ENCODE measurements at regions of chrX and their contacts with region 1.

Region 1: GRCh38 chrX:101390664-101391525 is at the start of gene RPL36A:
- DNase-seq: peak; percentile 63
- ATAC-seq: peak; percentile 85
- H3K4me3 ChIP-seq: peak within 1 kb of the TSS; percentile 72
- H3K27ac ChIP-seq: peak within 1 kb of the TSS; percentile 76
- H3K4me1 ChIP-seq: no peaks in the 10 kb centered on the region
- H3K27me3 ChIP-seq: no peaks in the 10 kb centered on the region
- CTCF ChIP-seq: peak; percentile 62 to 77 (median 74)
- EP300 ChIP-seq: no peak
- POLR2A ChIP-seq: peak; percentile 98
- RAD21 ChIP-seq: no peak
- polyA plus RNA-seq, gene RPL36A: 3,535 to 3,952 TPM

Region 2: GRCh38 chrX:100819837-100820666 is 570.8 kb before region 1 on chrX and contains the start of gene CSTF2:
- CTCF ChIA-PET with region 1: no interaction called
- POLR2A ChIA-PET with region 1: no interaction called
- RAD21 ChIA-PET with region 1: no interaction called
- SMC1A ChIA-PET with region 1: no interaction called
- in situ Hi-C with region 1: no loop called
- intact Hi-C with region 1: loop called (anchors 5 kb)
- DNase-seq: peak; percentile 50
- ATAC-seq: peak; percentile 100
- H3K4me3 ChIP-seq: peak within 1 kb of the TSS; percentile 76
- H3K27ac ChIP-seq: peak within 1 kb of the TSS; percentile 39
- H3K4me1 ChIP-seq: no peaks in the 10 kb centered on the region
- H3K27me3 ChIP-seq: no peaks in the 10 kb centered on the region; a peak in 2 of 4 replicates
- CTCF ChIP-seq: no peak
- EP300 ChIP-seq: no peak
- POLR2A ChIP-seq: peak; percentile 89
- RAD21 ChIP-seq: no peak
- polyA plus RNA-seq, gene CSTF2: 7.7 to 9.0 TPM

Region 3: GRCh38 chrX:101252634-101253033 is 138.3 kb before region 1 on chrX:
- CTCF ChIA-PET with region 1: no interaction called
- POLR2A ChIA-PET with region 1: no interaction called
- RAD21 ChIA-PET with region 1: no interaction called
- SMC1A ChIA-PET with region 1: no interaction called
- in situ Hi-C with region 1: no loop called
- intact Hi-C with region 1: no loop called
- DNase-seq: no peak
- ATAC-seq: no peak
- H3K4me3 ChIP-seq: no peak overlapping the region
- H3K27ac ChIP-seq: no peak overlapping the region
- H3K4me1 ChIP-seq: no peaks in the 10 kb centered on the region
- H3K27me3 ChIP-seq: no peaks in the 10 kb centered on the region
- CTCF ChIP-seq: no peak
- EP300 ChIP-seq: no peak
- POLR2A ChIP-seq: no peak
- RAD21 ChIP-seq: no peak

Region 4: GRCh38 chrX:101348452-101349192 is 42.3 kb before region 1 on chrX and contains the start of gene TIMM8A:
- CTCF ChIA-PET with region 1: interaction called, 9 read pairs
- POLR2A ChIA-PET with region 1: interaction called, 12 read pairs
- RAD21 ChIA-PET with region 1: interaction called, 4 read pairs
- SMC1A ChIA-PET with region 1: interaction called, 6 read pairs
- in situ Hi-C with region 1: no loop called
- intact Hi-C with region 1: loop called (anchors 5 kb)
- DNase-seq: peak; percentile 31
- ATAC-seq: peak; percentile 99
- H3K4me3 ChIP-seq: peak within 1 kb of the TSS; percentile 87
- H3K27ac ChIP-seq: peak within 1 kb of the TSS; percentile 72
- H3K4me1 ChIP-seq: 0 out of 2 replicates have a peak, but pooled peaks cover 3% of the 10 kb centered on the region
- H3K27me3 ChIP-seq: no peaks in the 10 kb centered on the region
- CTCF ChIP-seq: no peak
- EP300 ChIP-seq: no peak
- POLR2A ChIP-seq: peak; percentile 88
- RAD21 ChIP-seq: no peak
- polyA plus RNA-seq, gene TIMM8A: 84.5 to 92.7 TPM

Region 5: GRCh38 chrX:101407748-101408531 is 17.0 kb after region 1 on chrX and contains the starts of genes GLA and HNRNPH2:
- CTCF ChIA-PET with region 1: interaction called, 8 read pairs
- POLR2A ChIA-PET with region 1: interaction called, 7 read pairs
- RAD21 ChIA-PET with region 1: interaction called, 4 read pairs
- SMC1A ChIA-PET with region 1: interaction called, 6 read pairs
- in situ Hi-C with region 1: no loop called
- intact Hi-C with region 1: loop called (anchors 2 kb)
- DNase-seq: peak; percentile 98
- ATAC-seq: peak; percentile 88
- H3K4me3 ChIP-seq: peak within 1 kb of the TSS; percentile 75
- H3K27ac ChIP-seq: peak within 1 kb of the TSS; percentile 92
- H3K4me1 ChIP-seq: peaks cover 12% of the 10 kb centered on the region
- H3K27me3 ChIP-seq: no peaks in the 10 kb centered on the region
- CTCF ChIP-seq: no peak
- EP300 ChIP-seq: peak; percentile 41 to 70; a peak in 3 of 4 replicates
- POLR2A ChIP-seq: peak; percentile 77
- RAD21 ChIP-seq: peak; percentile 9; the same call in 1 of the 2 replicates
- polyA plus RNA-seq, gene GLA: 39.2 to 66.4 TPM
- polyA plus RNA-seq, gene HNRNPH2: 55.7 to 90.8 TPM

Region 6: DNA sequence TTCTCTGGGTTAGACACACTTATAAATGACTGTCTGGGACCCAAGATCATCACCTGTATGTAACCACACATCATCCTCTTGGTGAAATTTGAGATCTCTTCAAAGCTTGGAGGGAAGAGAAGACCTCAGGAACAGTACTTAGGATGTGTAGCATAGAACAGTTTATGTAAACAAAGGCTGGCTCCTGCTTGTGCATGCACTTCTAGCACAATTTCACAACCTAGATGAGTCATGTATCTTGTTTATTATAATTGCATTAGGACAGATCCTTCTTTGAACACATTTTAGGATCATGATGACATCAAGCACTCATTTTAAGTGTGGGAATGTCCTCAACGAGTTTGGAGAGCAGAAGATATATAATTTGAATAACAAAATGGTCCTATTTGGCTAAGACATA is 567.2 kb after region 1 on chrX:
- CTCF ChIA-PET with region 1: no interaction called
- POLR2A ChIA-PET with region 1: no interaction called
- RAD21 ChIA-PET with region 1: no interaction called
- SMC1A ChIA-PET with region 1: no interaction called
- in situ Hi-C with region 1: no loop called
- intact Hi-C with region 1: no loop called
- DNase-seq: no peak
- ATAC-seq: no peak
- H3K4me3 ChIP-seq: no peak overlapping the region
- H3K27ac ChIP-seq: no peak overlapping the region
- H3K4me1 ChIP-seq: no peaks in the 10 kb centered on the region
- H3K27me3 ChIP-seq: no peaks in the 10 kb centered on the region
- CTCF ChIP-seq: no peak
- EP300 ChIP-seq: no peak
- POLR2A ChIP-seq: no peak
- RAD21 ChIP-seq: no peak

Measured in GM12878 (cell line).